ENCODE measurements at regions of chr4 and their contacts with region 1.

Region 1: GRCh38 chr4:25972984-25973745 is 59.1 kb downstream of the SMIM20 start:
- DNase-seq: no peak
- H3K4me3 ChIP-seq: no peak overlapping the region
- H3K27ac ChIP-seq: no peak overlapping the region
- H3K4me1 ChIP-seq: peaks cover 0 to 12% (median 6%) of the 10 kb centered on the region in 4 experiments
- H3K27me3 ChIP-seq: no peaks in the 10 kb centered on the region

Region 2: DNA sequence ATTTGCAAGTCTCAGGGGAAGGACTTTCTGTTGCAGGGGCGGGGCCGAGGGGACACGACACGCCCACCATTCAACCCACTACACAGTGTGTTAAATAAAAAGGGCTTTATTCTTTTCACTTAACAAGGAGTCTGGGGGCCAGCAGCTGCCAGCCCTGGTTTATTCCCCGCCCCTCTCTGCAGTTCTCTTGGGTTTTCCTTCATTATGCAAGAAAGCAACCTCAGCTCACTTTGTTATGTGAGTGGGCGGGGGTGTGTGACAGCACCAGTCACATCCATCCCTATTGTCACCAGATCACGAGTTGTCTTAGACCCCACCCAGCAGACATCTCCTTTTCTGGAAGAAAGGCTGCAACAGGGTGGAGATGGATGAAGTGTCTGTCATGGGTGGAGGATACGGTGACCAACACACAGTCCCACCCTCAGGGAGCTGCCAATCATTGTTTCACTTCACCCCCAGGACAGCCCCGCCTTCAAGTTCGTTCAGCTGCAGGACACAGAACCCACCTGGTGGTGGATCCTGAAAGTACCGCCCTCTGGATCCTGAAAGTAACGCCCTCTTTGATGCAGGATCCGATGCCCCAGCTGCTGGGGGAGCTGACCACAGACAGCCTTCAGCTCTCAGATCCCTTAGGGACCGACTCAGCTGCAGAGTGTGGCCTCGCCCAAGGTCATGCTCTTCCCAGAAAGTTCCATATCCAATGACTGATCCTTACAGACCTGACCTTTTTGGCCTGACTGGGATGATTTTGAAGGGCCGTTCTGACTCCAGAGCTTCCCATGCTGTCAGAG is 20.4 kb after region 1 on chr4:
- CTCF ChIA-PET with region 1: interaction called, 11 read pairs
- POLR2A ChIA-PET with region 1: no interaction called
- DNase-seq: peak in 2 of 3 donors; percentile 10 to 11
- H3K4me3 ChIP-seq: no peak overlapping the region
- H3K27ac ChIP-seq: no peak overlapping the region
- H3K4me1 ChIP-seq: no peaks in the 10 kb centered on the region
- H3K27me3 ChIP-seq: peaks cover 0 to 1% (median 0%) of the 10 kb centered on the region in 5 experiments